ENCODE measurements at regions of chr13 and their contacts with region 1.

Region 1: DNA sequence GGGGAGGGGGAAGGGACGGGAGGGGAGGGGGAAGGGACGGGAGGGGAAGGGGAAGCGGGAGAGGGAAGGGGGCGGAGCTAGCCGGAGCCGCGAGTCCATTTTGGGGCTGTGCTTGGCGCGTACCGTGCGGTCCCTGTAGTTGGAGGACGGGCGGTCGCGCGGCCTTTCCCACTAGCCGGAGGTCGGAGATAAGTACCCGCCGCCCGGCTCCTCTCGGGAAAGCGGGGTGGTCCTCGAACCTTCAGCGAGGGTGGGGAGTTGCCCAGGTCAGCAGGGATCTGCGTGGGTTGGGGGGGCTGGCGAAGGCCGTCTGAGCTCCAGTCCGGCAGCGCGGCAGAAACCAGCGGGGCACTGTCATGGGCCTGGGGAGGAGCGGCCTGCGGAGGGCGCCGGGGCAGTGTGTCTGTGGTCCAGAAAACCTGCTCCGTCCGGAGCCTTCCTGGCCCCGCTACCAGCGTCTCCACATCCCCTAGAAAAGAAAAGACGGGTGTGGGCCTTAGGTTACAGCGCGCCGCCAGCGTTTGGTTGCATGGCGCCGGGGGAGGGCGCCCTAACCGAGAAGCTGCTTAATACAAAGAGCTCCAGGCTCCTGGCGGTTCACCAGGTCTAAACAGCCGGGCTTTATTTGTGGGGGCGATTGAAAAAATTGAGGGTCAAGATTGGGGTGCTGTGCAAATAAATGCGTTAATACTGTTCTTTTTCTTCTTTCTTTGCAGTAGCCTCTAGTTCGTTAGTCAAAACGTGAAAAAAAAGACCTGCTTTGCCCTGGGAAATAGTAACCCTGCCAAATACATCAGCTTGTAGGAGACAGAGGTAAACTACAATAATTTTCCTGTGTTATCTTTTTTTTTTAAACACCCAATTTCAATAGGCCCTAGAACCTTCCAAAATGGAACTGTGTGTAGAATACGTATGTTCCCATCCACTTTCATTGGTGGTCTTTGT is at the start of gene TRIM13:
- DNase-seq: peak; percentile 62 to 86 (median 78)
- H3K4me3 ChIP-seq: peak within 1 kb of the TSS; percentile 92
- H3K4me3 Mint-ChIP-seq: peak within 1 kb of the TSS; percentile 84 to 96 (median 89)
- H3K27ac ChIP-seq: peak within 1 kb of the TSS; percentile 88
- H3K27ac Mint-ChIP-seq: peak within 1 kb of the TSS; percentile 84 to 96 (median 91)
- H3K4me1 ChIP-seq: peaks cover 36% of the 10 kb centered on the region
- H3K4me1 Mint-ChIP-seq: peaks cover 39 to 58% (median 56%) of the 10 kb centered on the region in 3 donors
- H3K27me3 ChIP-seq: no peaks in the 10 kb centered on the region
- H3K27me3 Mint-ChIP-seq: peaks cover 0 to 2% of the 10 kb centered on the region in 2 donors
- total RNA-seq, gene TRIM13: 16.5 to 17.1 TPM

Region 2: GRCh38 chr13:50081679-50082425 is 84.6 kb after region 1 on chr13:
- CTCF ChIA-PET with region 1: interaction called, 50 read pairs
- POLR2A ChIA-PET with region 1: interaction called, 46 read pairs
- DNase-seq: peak; percentile 97 to 99 (median 98)
- H3K4me3 ChIP-seq: peak overlapping the region; percentile 97
- H3K4me3 Mint-ChIP-seq: peak overlapping the region; percentile 93 to 100 (median 97)
- H3K27ac ChIP-seq: peak overlapping the region; percentile 78
- H3K27ac Mint-ChIP-seq: peak overlapping the region; percentile 82 to 98 (median 96)
- H3K4me1 ChIP-seq: peaks cover 21% of the 10 kb centered on the region
- H3K4me1 Mint-ChIP-seq: peaks cover 53 to 66% (median 59%) of the 10 kb centered on the region in 3 donors
- H3K27me3 ChIP-seq: no peaks in the 10 kb centered on the region
- H3K27me3 Mint-ChIP-seq: peaks cover 4 to 8% of the 10 kb centered on the region in 2 donors

Region 3: DNA sequence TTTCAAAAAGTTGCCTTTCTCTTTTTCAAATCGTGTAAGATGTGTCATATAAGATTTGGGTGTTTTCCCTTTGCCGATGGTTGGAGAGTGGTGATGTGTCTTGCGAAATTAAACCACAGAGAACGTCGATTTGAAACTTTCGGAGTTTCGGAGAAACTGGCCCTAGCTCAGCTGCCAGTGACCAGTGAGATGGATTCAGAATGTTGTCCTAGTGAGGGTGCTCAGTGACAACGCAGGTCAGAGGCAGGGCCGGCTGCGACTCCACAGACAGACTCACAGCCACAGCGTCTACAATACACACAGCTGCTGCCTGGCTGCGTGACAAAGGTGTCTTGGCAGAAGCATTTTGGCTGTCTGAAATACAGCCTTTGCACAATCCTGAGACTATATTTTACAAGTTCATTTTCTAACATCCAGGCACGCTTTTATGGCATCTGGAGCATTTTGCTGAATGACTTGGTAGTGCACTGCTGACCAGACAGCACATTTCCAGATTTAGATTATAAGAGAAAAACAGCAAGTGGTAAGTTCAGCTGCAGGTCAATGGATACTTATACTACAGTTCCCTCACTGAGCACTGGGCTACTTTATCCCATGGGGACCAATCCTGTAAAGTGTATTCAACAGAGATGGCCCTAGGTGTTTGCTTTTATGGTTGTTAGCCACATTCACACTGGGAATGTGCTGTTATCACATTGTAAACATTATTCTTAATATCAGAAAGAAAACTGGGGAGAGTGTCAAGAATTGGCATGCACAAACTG is 225.5 kb after region 1 on chr13:
- CTCF ChIA-PET with region 1: no interaction called
- POLR2A ChIA-PET with region 1: no interaction called
- DNase-seq: peak in 1 of 5 donors; percentile 56
- H3K4me3 ChIP-seq: peak overlapping the region; percentile 14
- H3K4me3 Mint-ChIP-seq: peak overlapping the region; percentile 29 to 92 (median 82)
- H3K27ac ChIP-seq: no peak overlapping the region
- H3K27ac Mint-ChIP-seq: peak overlapping the region; percentile 50 to 89 (median 84)
- H3K4me1 ChIP-seq: peaks cover 7% of the 10 kb centered on the region
- H3K4me1 Mint-ChIP-seq: peaks cover 34 to 63% (median 62%) of the 10 kb centered on the region in 3 donors
- H3K27me3 ChIP-seq: no peaks in the 10 kb centered on the region
- H3K27me3 Mint-ChIP-seq: peaks cover 0 to 7% of the 10 kb centered on the region in 2 donors

Region 4: GRCh38 chr13:50236898-50237318 is 239.7 kb after region 1 on chr13:
- CTCF ChIA-PET with region 1: interaction called, 6 read pairs
- POLR2A ChIA-PET with region 1: interaction called, 10 read pairs
- DNase-seq: peak in 3 of 5 donors; percentile 4 to 51 (median 43)
- H3K4me3 ChIP-seq: peak overlapping the region; percentile 33
- H3K4me3 Mint-ChIP-seq: peak overlapping the region; percentile 59 to 91 (median 87)
- H3K27ac ChIP-seq: peak overlapping the region; percentile 39
- H3K27ac Mint-ChIP-seq: peak overlapping the region; percentile 45 to 95 (median 89)
- H3K4me1 ChIP-seq: peaks cover 14% of the 10 kb centered on the region
- H3K4me1 Mint-ChIP-seq: peaks cover 35 to 51% (median 45%) of the 10 kb centered on the region in 3 donors
- H3K27me3 ChIP-seq: no peaks in the 10 kb centered on the region
- H3K27me3 Mint-ChIP-seq: no peaks in the 10 kb centered on the region

Region 5: DNA sequence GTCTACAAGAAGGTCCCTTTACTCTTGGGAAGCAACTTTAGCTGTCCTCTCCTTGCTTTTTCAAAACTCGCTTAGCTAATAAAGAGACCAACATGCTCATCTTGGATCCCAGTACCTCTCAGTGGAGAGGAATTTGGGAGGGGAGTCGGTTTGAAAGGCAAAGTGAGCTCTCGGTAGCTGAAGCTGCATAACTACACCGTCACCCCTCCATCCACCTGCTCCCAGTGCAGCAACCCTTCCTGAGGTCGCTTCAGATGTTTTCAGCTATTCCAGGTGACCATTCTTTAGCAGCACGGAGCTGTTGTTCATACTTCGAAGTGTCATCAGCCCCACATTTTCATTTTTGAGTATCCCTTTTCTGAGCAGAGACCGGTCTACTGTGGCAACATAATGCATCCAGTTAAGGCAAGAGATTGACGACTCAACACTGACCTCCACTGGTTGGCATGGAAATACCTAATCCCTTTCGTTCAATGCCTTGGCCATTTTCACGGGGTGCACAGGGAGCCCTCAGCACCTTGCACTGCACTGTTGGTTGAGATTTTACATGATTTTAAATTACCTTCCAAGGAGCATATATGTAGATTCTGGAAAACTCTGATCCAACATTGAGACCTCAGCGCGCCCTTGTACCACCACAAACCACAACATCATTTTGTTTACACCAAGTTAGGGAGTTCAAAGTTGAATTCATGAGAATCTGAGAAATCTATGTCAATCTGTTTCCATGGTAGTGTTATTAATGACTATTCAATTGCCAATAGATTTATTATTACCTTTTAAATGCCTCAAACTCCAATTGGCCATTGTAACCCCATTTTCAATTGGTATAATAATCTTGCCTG is 804.1 kb after region 1 on chr13:
- CTCF ChIA-PET with region 1: interaction called, 11 read pairs
- POLR2A ChIA-PET with region 1: no interaction called
- DNase-seq: peak; percentile 29 to 69 (median 52)
- H3K4me3 ChIP-seq: no peak overlapping the region
- H3K4me3 Mint-ChIP-seq: no peak overlapping the region
- H3K27ac ChIP-seq: no peak overlapping the region
- H3K27ac Mint-ChIP-seq: peak overlapping the region in 1 of 8 donors; percentile 70
- H3K4me1 ChIP-seq: no peaks in the 10 kb centered on the region
- H3K4me1 Mint-ChIP-seq: peaks cover 5 to 8% (median 7%) of the 10 kb centered on the region in 3 donors
- H3K27me3 ChIP-seq: no peaks in the 10 kb centered on the region
- H3K27me3 Mint-ChIP-seq: peaks cover 0 to 2% of the 10 kb centered on the region in 2 donors

Measured in CD8-positive, alpha-beta memory T cell (primary cell).